ENCODE measurements at regions of chr3 and their contacts with region 1.

Region 1: GRCh38 chr3:107740992-107741896 is 218.5 kb downstream of the BBX start:
- DNase-seq: no peak
- ATAC-seq: no peak
- H3K4me3 Mint-ChIP-seq: no peak overlapping the region
- H3K27ac Mint-ChIP-seq: no peak overlapping the region
- H3K4me1 Mint-ChIP-seq: peaks cover 31% of the 10 kb centered on the region
- H3K27me3 Mint-ChIP-seq: no peaks in the 10 kb centered on the region
- CTCF ChIP-seq: no peak

Region 2: DNA sequence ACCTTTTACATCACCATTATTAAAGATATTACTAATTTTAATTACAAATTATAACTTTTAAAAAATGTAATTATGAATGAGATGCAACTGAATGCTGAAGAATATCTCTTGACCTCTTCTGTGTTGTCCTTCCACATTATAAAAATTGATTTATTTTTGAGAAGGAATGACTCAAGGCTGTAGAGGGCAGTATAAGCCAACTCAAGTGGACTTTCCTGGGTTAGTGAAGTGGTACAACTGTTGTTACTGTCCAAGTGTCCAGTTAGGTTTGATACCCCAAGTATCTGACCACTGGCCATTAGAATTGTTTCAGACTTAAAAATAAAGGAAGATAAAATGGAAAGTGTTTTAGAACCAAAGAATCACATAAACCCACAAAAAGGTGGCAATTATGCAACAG is 166.6 kb before region 1 on chr3:
- CTCF ChIA-PET with region 1: interaction called, 13 read pairs
- POLR2A ChIA-PET with region 1: no interaction called
- intact Hi-C with region 1: loop called (anchors 1 kb)
- DNase-seq: no peak
- ATAC-seq: no peak
- H3K4me3 Mint-ChIP-seq: no peak overlapping the region
- H3K27ac Mint-ChIP-seq: no peak overlapping the region
- H3K4me1 Mint-ChIP-seq: peaks cover 16% of the 10 kb centered on the region
- H3K27me3 Mint-ChIP-seq: no peaks in the 10 kb centered on the region
- CTCF ChIP-seq: no peak

Region 3: DNA sequence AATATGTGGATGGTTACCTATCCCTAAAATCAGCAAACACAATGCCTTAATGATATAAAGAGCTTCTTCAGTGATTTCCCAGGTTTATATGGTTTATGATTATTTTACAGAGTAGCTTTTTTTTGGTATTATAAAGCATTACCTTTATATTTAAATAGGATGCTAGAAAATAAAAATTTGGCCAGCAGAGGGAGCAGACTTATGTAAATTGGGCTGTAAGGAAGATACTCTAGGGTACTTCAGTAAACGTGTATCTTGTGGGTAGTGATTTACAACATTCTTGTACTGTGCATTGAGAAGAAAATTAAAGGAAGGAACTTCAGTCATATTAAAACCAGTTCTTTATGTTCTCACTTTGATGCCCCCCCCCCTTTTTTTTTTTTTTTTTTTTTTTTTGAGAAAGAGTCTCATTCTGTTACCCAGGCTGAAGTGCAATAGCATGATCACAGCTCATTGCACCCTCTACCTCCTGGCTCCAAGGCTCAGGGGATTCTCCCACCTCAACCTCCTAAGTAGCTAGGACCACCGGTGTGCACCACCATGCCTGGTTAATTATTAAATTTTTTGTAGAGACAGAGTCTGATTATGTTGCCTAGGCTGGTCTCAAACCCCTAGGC is 50.6 kb before region 1 on chr3:
- CTCF ChIA-PET with region 1: interaction called, 12 read pairs
- POLR2A ChIA-PET with region 1: no interaction called
- intact Hi-C with region 1: loop called (anchors 1 kb)
- DNase-seq: no peak
- ATAC-seq: peak; percentile 61
- H3K4me3 Mint-ChIP-seq: no peak overlapping the region
- H3K27ac Mint-ChIP-seq: no peak overlapping the region
- H3K4me1 Mint-ChIP-seq: peaks cover 6% of the 10 kb centered on the region
- H3K27me3 Mint-ChIP-seq: no peaks in the 10 kb centered on the region
- CTCF ChIP-seq: no peak

Measured in activated B cell treated with CpG ODN at 0.5 μM for 24 hours (primary cell).